Sciatic nerve (tissue), 2 donors: ENCODE measurements at regions of chr5 and their contacts with region 1.

Region 1: DNA sequence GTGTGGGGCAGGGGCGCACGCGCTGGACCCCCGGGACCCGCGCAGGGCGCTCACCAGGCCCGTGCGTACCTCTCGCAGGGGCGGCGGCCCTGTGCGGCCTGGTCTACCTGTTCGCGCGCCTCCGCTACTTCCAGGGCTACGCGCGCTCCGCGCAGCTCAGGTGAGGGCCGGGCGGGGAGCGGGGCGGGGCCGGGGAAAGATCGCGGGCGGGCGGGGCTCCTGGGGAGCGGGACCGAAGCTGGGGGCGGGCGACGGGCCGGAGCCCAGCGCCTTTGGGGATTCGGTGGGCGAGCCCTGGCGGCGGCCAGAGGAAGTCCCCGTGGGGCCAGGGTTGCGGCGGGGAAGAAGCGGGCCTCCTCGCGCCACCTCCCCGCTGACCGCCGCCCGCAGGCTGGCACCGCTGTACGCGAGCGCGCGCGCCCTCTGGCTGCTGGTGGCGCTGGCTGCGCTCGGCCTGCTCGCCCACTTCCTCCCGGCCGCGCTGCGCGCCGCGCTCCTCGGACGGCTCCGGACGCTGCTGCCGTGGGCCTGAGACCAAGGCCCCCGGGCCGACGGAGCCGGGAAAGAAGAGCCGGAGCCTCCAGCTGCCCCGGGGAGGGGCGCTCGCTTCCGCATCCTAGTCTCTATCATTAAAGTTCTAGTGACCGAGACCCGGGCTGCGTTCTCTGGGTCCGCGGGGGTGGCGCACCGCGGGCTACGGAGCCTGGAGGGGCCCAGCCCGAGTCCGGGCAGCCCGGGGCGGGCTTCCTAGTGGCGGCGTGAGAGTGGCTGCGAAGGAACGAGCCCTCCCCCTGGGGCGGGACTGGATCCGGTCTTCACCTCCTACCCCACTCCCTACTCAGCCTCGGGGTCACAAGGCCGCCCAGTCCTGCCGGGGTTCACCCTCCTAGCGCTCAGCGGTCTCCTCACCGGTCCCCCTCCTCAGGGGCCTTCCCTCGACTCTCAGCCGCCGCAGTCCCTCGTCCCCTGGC is 2.4 kb downstream of the LTC4S start:
- DNase-seq: peak; percentile 89
- ATAC-seq: peak; percentile 75

Region 2: GRCh38 chr5:178984145-178985072 is 811.7 kb before region 1 on chr5:
- intact Hi-C with region 1: no loop called
- DNase-seq: no peak
- ATAC-seq: no peak

Region 3: DNA sequence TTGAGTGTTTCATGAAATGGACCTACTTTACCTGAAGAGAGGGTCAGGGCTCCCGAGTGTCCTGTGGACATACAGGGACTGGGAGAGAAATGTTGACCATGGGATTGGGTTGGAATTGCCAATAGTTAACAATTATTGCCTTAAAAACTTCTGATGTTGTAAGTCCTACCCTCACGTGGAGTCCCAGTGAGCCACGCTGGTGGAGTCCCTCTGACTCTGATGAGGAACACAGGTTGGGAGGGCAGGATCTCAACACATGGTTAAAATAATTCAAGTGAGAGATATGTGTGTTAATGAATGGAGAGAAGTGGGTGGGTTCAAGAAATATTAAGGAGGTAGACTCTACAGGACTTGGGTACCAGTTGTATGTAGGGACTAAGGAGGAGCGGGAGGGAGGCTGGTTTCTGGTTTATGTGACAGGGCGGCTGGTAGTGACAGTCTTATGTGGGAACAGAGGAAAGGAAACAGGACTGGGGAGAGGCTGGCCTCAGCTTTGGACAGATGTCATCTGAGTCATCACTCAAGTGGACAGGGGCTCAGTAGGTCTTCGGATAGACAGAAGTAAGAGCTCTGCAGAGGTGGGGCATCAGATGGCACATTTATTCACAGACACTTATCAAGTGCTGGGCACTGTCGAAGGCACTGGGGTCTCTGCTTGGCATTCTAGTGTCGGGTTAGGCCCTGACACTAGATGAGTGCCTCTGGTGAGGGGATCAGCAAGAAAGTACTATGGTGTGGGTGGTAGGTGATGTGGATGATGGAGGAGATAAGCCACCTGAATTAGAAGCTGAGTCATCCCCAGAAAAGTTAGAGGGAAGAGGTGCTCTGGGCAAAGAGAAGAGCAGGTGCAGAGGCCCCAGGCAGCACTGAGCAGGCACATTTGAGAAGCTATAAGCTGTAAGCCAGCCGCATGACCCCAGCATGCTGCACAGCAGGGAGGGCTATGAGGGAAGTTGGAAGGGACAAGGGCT is 36.3 kb before region 1 on chr5:
- intact Hi-C with region 1: loop called (anchors 2 kb)
- DNase-seq: no peak
- ATAC-seq: no peak

Region 4: DNA sequence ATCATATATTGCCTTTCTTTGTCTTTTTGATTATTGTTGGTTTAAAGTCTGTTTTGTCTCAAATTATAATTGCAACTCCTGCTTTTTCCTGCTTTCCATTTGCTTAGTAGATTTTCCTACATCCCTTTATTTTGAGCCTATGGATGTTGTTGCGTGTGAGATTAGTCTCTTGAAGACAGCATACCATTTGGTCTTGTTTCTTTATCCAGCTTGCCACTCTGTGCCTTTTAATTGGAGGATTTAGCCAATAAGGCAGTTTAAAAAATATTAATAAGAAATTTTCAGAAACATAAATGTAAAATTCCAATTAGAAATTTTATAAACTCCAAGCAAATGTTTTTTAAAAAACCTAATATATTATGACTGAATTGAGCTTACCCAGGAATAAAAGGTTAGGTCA is 1126.8 kb after region 1 on chr5:
- intact Hi-C with region 1: no loop called
- DNase-seq: no peak
- ATAC-seq: no peak